ENCODE measurements at regions of chr12 and their contacts with region 1.

Region 1: DNA sequence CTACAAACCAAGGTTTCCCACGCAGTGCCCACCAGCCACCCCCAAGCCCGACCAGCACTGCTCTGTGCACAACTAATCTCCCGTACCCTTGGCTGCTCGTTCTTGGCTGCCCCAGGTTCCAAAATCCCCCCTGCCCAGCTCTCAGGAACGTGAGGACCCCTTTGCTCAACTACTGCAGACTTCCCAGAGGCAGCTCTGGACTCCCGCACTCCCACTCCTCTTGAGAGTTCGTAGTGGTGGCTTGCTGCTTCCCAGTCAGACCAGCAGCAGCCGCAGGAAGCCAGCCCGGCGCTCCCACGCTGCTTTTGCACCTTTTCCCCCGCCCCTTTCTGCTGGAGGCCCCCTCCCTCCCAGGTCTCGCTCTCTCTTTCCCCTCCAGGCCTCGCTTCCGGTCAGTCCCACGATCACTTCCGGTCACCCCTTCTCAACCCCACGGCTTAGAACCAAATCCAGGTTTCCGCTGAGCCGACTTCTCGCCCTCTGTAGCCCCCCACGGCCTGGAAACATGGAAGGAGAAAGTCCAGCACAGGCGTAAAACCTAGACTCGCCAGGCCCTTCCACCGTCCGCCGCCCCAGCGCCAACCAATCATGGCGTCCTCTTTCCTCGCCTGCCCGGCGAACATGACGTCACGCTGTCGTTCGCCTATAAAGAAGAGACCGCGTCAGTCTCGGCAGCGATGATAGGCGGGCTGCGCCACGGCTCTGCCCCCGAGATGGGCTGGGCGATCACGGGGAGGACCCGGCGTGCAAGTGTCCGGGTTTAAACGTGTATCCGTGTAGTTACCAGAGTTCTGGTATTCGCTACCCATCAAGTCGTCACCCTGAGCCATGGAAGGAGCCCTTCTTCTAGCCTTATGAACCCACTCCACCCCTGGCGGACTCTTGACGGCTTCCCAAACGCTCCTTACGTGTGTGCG is at the start of gene TFCP2:
- DNase-seq: peak; percentile 98 to 99
- H3K4me3 ChIP-seq: peak within 1 kb of the TSS; percentile 58
- H3K4me3 Mint-ChIP-seq: no peak within 1 kb of the TSS
- H3K27ac Mint-ChIP-seq: no peak within 1 kb of the TSS
- H3K4me1 ChIP-seq: peaks cover 6% of the 10 kb centered on the region; the same call in 1 of the 2 replicates
- H3K4me1 Mint-ChIP-seq: no peaks in the 10 kb centered on the region
- H3K27me3 ChIP-seq: no peaks in the 10 kb centered on the region
- H3K27me3 Mint-ChIP-seq: no peaks in the 10 kb centered on the region
- CTCF ChIP-seq: peak in 1 of 2 experiments; percentile 25
- total RNA-seq, gene TFCP2: 51.4 and 52.6 TPM in 2 replicates

Region 2: DNA sequence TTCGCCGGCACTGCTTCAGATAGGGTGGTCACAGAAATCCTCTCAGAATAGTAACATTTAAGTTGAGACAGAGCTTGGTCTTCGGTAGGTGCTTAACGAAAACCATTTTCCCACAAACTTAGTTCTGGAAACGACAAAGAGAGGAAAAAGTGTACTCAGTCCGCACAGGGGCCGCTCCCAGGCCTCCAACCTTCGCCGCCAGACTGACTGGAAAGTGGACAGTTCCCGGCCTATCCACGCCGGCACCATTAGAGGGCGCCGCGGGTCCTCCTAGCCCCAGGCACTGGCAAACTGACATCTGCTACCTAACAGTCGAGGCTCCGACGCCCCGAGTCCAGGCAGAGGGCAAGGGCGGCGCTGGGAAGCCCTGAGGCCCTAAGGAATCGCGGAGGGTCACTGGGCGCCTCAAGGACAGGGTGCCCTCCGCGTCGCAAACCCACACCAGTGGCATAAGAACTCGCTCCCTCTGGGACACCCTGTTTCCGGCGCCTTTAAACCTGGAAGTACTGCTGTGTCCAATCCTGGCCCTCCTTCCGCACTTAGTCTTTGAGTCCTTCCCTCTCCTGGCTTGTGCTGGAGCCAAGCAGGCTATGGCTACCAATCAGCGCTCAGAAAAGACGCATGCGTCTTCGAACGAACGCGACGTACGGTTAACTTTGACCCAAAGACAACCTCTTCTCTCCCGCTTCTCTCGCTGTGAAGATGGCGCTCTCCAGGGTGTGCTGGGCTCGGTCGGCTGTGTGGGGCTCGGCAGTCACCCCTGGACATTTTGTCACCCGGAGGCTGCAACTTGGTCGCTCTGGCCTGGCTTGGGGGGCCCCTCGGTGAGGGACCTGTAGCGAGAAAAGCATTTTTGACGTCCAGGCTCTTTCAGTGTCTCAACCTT is 124.9 kb before region 1 on chr12 and contains the start of gene LETMD1:
- CTCF ChIA-PET with region 1: no interaction called
- POLR2A ChIA-PET with region 1: no interaction called
- intact Hi-C with region 1: loop called (anchors 1 kb)
- DNase-seq: peak; percentile 96 to 98
- H3K4me3 ChIP-seq: peak within 1 kb of the TSS; percentile 64
- H3K4me3 Mint-ChIP-seq: peak within 1 kb of the TSS; percentile 99
- H3K27ac Mint-ChIP-seq: peak within 1 kb of the TSS; percentile 96
- H3K4me1 ChIP-seq: no peaks in the 10 kb centered on the region
- H3K4me1 Mint-ChIP-seq: no peaks in the 10 kb centered on the region
- H3K27me3 ChIP-seq: no peaks in the 10 kb centered on the region
- H3K27me3 Mint-ChIP-seq: no peaks in the 10 kb centered on the region
- CTCF ChIP-seq: peak; percentile 93 to 99
- total RNA-seq, gene LETMD1: 90.6 and 95.6 TPM in 2 replicates

Region 3: GRCh38 chr12:51059086-51059485 is 113.7 kb before region 1 on chr12:
- CTCF ChIA-PET with region 1: no interaction called
- POLR2A ChIA-PET with region 1: no interaction called
- intact Hi-C with region 1: no loop called
- DNase-seq: no peak
- H3K4me3 ChIP-seq: no peak overlapping the region
- H3K4me3 Mint-ChIP-seq: no peak overlapping the region
- H3K27ac Mint-ChIP-seq: no peak overlapping the region
- H3K4me1 ChIP-seq: peaks cover 9% of the 10 kb centered on the region
- H3K4me1 Mint-ChIP-seq: no peaks in the 10 kb centered on the region
- H3K27me3 ChIP-seq: no peaks in the 10 kb centered on the region
- H3K27me3 Mint-ChIP-seq: no peaks in the 10 kb centered on the region
- CTCF ChIP-seq: no peak

Region 4: GRCh38 chr12:51122844-51123243 is 49.9 kb before region 1 on chr12:
- CTCF ChIA-PET with region 1: no interaction called
- POLR2A ChIA-PET with region 1: no interaction called
- intact Hi-C with region 1: loop called (anchors 5 kb)
- DNase-seq: no peak
- H3K4me3 ChIP-seq: no peak overlapping the region
- H3K4me3 Mint-ChIP-seq: no peak overlapping the region
- H3K27ac Mint-ChIP-seq: no peak overlapping the region
- H3K4me1 ChIP-seq: peaks cover 8% of the 10 kb centered on the region
- H3K4me1 Mint-ChIP-seq: no peaks in the 10 kb centered on the region
- H3K27me3 ChIP-seq: no peaks in the 10 kb centered on the region
- H3K27me3 Mint-ChIP-seq: no peaks in the 10 kb centered on the region
- CTCF ChIP-seq: no peak

Region 5: DNA sequence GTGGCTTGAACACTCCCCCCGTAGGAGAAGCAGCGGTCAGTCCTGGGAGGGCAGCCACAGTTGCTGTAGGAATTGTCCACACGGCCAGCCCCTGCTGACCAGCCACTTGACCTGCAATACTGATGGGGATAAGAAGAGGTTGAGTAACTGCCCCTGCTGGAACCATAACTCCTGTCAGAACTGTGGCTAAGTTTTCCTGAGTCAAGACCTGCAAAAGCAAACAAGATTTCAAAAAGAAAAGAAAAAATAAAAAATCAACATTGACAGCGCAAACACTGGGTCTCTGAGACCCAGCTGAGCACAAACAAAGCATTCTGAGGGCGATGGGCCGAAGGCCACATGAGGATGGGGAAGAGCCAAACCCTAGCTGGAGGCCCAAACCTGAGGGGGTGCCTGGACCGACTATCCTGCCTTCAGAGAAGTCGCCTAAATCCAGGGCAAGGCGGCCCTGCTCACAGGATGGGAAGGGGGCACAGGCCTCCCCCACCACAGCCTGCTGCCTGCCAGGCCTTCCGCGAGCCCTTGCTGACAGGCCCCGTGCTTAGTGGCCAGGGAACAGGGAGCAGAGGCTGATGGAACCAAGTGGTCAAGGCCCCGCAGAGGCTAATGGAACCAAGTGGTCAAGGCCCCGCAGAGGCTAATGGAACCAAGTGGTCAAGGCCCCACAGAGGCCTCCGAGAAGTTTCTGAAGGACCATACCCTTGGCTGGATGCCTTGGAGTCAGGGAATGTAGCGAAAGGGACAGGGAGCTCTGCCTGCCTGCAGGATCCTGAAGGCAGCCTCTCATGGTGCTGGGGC is 26.0 kb after region 1 on chr12:
- CTCF ChIA-PET with region 1: no interaction called
- POLR2A ChIA-PET with region 1: no interaction called
- intact Hi-C with region 1: loop called (anchors 1 kb)
- DNase-seq: peak; percentile 50 to 52
- H3K4me3 ChIP-seq: no peak overlapping the region
- H3K4me3 Mint-ChIP-seq: no peak overlapping the region
- H3K27ac Mint-ChIP-seq: peak overlapping the region; percentile 43
- H3K4me1 ChIP-seq: peaks cover 11% of the 10 kb centered on the region; the same call in 1 of the 2 replicates
- H3K4me1 Mint-ChIP-seq: peaks cover 21% of the 10 kb centered on the region
- H3K27me3 ChIP-seq: no peaks in the 10 kb centered on the region
- H3K27me3 Mint-ChIP-seq: no peaks in the 10 kb centered on the region
- CTCF ChIP-seq: peak in 1 of 2 experiments; percentile 13

Measured in Caco-2 (cell line).